Activated CD4-positive, alpha-beta T cell treated with anti-CD3 and anti-CD28 coated beads for 36 hours (primary cell): ENCODE measurements at regions of chr16 and their contacts with region 1.

Region 1: GRCh38 chr16:3099732-3100499 is 822 bp upstream of the ZSCAN10 start:
- DNase-seq: peak; percentile 99
- ATAC-seq: peak; percentile 84
- H3K4me3 Mint-ChIP-seq: peak overlapping the region; percentile 68
- H3K27ac Mint-ChIP-seq: peak overlapping the region; percentile 84
- H3K4me1 Mint-ChIP-seq: peaks cover 49% of the 10 kb centered on the region
- H3K27me3 Mint-ChIP-seq: no peaks in the 10 kb centered on the region

Region 2: GRCh38 chr16:3165111-3165822 is 65.4 kb after region 1 on chr16:
- CTCF ChIA-PET with region 1: interaction called, 6 read pairs
- POLR2A ChIA-PET with region 1: no interaction called
- intact Hi-C with region 1: loop called in 1 of 2 experiments (anchors 5 kb)
- DNase-seq: no peak
- ATAC-seq: no peak
- H3K4me3 Mint-ChIP-seq: peak overlapping the region; percentile 32
- H3K27ac Mint-ChIP-seq: peak overlapping the region; percentile 68
- H3K4me1 Mint-ChIP-seq: peaks cover 10% of the 10 kb centered on the region
- H3K27me3 Mint-ChIP-seq: peaks cover 2% of the 10 kb centered on the region